GM18951 (cell line): ENCODE measurements at regions of chr20 and their contacts with region 1.

Region 1: DNA sequence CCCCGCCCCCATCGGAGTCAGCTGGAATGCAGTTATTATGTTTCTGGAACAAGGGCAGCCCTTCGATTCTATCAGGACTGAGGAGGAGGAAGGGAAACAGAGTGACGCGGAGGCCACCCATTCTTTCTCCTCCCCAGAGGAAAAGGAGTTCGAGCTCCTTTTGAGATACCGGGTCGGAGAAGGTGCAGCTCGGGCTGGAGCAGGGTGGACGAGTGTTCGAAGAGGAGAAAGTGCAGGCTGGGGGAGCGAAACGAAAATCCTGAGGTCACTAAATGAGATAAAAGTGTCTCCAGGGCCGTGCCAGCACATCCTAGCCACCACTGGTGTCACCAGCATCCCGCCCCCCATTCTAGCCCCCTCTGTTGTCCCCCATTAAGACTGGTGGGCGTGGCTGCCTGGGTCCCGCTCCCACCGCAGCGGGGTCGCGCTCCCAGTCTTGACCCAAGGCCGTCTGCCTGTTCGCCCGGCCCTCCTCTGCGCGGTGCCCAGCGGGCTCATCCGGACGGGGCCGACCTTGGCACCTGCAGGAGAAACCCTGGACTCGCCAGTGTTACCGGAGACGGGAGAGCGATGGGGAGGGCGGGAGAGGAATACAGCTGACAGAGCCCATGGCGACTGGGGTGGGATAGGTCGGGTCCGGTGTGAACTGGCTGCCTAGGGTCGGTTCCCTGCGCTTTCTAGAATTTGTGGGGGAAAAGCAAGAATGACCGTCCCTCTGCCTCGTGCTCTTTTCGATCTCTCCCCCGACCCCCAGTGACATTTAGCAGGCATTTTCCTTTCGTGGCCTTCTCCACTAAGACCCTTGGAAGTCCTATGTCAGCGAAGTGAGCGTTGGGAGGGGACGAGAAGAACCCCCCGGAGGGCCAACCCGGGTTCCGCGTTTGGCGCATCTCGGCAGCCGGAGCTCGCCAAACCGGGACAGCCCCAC is 16.2 kb downstream of the FOXA2 start:
- POLR2A ChIP-seq: no peak

Region 2: DNA sequence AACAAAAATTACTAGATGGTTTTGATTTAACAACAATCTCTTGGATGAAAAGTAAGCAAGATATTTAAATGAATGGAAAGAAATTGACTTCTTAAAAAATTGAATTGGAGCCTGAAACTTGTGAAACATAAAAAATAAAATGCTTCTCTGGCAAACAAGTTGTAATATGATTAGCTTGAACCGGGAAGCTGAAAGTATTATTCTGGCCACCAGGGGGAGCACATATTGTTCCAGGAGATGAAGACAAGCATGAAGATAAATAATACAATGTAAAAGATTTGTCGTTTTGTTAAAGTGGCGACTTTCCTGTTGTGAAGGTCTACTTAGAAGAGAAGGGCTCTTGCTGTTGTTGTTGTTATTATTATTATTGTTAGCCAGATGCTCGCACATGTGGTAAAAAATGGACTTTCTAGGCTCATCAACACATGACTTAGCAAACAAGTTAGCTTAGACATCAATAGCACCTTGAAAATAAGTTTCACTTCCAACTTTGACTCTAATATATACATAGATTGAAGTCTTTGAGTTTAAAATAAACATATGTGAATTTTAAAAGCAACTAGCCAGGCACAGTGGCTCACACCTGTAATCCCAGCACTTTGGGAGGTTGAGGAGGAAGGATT is 848.5 kb before region 1 on chr20:
- in situ Hi-C with region 1: loop called (anchors 25 kb)
- POLR2A ChIP-seq: no peak

Region 3: GRCh38 chr20:22480336-22480735 is 87.9 kb before region 1 on chr20:
- in situ Hi-C with region 1: no loop called
- POLR2A ChIP-seq: no peak

Region 4: DNA sequence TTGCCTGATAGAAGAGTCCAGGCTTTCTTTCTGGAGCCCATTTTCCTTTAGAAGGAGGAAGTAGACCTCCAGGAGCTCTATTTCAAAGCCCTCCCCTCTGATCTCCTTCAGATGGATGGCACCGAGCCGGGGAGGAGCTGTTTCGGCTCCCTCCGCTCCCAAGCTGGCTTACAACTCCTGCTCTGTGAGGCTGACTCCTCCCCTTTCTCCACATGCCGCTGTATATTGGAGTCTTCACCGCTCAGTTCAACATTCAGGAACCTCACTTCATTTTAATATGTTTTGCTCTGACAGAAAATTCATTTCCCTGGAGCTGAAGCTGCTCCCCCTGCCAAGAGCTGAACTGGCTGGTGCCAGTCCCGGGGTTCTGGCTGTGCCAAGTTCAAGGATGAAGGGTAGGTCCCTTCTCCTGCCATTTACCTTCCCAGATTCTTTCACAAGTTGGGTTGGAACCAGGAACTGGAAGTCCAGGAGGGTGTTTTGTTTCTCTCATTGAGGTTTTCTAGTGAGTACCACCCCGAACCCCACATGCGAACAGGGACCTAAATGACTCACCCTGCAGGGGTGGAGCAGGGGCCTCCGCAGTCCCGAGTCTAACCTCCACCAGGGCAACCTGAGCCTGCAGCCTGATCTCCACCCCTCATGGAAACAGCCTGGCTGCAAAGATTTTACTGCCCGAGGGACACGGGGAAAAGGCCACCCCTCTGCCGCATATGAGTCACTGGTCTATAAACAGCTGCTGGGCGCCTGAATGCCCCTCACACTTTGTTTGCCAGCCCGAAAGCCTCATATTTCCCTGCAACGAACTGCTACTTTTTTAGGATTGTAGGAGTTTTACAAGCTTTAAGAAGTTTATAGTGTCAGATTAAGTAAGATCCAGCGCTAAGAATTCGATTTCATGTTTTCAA is 84.7 kb after region 1 on chr20:
- in situ Hi-C with region 1: no loop called
- POLR2A ChIP-seq: no peak